Activated CD4-positive, alpha-beta memory T cell treated with anti-CD3 and anti-CD28 coated beads for 36 hours (primary cell): ENCODE measurements at regions of chr5 and their contacts with region 1.

Region 1: DNA sequence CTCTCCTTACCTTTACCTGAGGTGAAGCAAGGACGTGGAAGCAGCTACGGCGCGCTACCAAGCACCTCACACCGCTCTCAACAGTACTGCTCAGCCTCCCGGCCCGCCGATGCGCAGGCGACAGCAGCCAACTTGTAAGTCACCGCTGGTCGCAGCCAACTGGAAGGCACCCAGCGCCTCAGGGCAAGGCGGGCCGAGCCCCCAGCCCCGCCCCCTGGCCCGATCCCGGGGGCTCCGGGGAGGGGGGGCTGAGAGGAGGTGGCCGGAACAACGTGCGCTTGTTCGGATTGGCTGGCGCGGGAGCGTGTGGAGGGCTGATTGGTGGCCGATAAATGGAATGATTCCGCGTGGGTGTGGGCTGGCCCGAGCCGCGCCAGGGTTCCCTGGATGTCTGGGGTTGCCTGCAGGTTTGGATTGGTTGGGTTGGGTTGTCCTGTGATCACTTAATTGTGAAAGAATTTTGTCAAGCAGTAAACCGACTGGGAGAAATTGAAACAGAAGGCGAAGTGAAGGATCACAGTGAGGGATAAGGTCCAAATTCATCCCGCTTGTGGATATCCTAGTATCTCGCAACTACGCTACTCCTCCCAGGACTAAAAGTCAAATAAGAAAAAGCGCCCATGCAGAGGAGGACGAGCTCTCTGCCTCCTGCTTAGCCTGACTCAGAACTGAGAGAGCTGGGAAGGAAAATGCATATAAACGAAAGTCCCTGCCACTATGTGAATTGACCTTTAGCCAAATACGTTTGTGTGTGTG is at the start of gene STARD4:
- DNase-seq: peak; percentile 96
- H3K4me3 Mint-ChIP-seq: peak within 1 kb of the TSS; percentile 88
- H3K27ac Mint-ChIP-seq: peak within 1 kb of the TSS; percentile 94
- H3K4me1 Mint-ChIP-seq: peaks cover 35% of the 10 kb centered on the region
- H3K27me3 Mint-ChIP-seq: no peaks in the 10 kb centered on the region
- total RNA-seq, gene STARD4: 49.5 to 49.9 TPM

Region 2: DNA sequence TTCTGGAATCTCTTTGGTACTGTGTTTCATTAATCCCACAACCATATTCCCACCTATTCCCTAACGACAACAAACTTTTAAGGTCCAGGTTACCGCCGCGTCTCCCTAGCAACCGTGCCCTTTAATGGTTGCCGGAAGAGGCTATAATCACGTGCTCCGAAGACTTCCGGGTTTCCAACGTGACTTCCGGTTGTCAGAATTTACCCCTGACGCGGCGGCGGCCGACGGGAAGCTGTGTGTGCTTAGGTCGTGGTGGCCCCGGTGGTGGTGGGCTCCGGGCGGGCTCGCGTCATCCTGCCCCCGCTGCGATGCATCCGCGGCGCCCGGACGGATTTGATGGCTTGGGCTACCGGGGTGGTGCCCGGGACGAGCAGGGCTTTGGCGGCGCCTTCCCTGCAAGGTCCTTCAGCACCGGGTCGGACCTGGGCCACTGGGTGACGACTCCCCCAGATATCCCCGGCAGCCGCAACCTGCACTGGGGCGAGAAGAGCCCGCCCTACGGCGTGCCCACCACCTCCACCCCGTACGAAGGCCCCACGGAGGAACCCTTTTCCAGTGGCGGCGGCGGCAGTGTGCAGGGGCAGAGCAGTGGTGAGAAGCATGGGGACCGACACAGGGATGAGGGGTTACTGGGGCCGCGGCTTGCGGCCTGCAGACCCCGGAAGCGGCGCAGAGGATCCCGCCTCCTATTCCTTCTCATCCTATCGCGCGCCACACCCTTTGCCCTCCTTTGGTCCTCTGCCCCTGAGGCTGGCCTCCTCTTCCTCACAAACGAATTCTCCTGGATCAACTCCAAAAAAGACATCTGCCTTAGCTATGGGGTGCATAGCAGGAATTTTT is 773.5 kb before region 1 on chr5 and contains the start of gene SLC25A46:
- CTCF ChIA-PET with region 1: no interaction called
- POLR2A ChIA-PET with region 1: no interaction called
- intact Hi-C with region 1: loop called (anchors 5 kb)
- DNase-seq: peak; percentile 93
- H3K4me3 Mint-ChIP-seq: peak within 1 kb of the TSS; percentile 91
- H3K27ac Mint-ChIP-seq: peak within 1 kb of the TSS; percentile 84
- H3K4me1 Mint-ChIP-seq: peaks cover 34% of the 10 kb centered on the region
- H3K27me3 Mint-ChIP-seq: peaks cover 5% of the 10 kb centered on the region
- total RNA-seq, gene SLC25A46: 35.4 to 37.6 TPM

Region 3: DNA sequence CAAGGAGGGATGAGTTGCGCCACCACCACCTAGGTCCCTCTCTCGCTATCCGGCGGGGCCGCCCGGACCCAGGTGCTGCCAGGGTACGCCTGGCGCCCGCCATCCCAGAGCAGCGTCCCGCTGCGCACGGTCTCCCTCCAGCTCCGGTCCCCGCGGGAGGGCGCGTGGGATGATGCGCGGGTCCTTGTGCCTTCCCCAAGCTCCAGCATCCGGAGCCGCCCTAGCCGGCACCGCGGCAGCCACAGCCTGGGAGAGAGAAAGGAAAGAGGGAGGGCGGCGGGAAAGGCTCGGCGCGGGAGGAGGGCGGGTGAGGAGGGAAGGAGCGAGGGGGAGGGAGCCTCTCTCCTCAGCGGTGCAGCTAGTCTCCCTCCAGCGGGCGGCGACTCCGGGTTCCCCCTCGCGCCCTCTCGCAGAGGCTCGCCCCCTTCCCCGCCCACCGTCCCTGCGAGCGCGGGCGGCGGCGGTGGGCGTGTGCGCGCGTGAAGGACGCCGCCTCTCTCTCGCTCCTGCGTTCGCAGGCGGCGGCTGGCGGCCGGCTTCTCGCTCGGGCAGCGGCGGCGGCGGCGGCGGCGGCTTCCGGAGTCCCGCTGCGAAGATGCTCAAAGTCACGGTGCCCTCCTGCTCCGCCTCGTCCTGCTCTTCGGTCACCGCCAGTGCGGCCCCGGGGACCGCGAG is 288.5 kb before region 1 on chr5 and contains the start of gene CAMK4:
- CTCF ChIA-PET with region 1: no interaction called
- POLR2A ChIA-PET with region 1: no interaction called
- intact Hi-C with region 1: loop called (anchors 1 kb)
- DNase-seq: peak; percentile 77
- H3K4me3 Mint-ChIP-seq: peak within 1 kb of the TSS; percentile 89
- H3K27ac Mint-ChIP-seq: peak within 1 kb of the TSS; percentile 90
- H3K4me1 Mint-ChIP-seq: peaks cover 34% of the 10 kb centered on the region
- H3K27me3 Mint-ChIP-seq: no peaks in the 10 kb centered on the region
- total RNA-seq, gene CAMK4: 33.3 to 36.5 TPM

Region 4: GRCh38 chr5:111337688-111338087 is 174.9 kb before region 1 on chr5:
- CTCF ChIA-PET with region 1: no interaction called
- POLR2A ChIA-PET with region 1: no interaction called
- intact Hi-C with region 1: loop called (anchors 1 kb)
- DNase-seq: peak; percentile 9
- H3K4me3 Mint-ChIP-seq: no peak overlapping the region
- H3K27ac Mint-ChIP-seq: peak overlapping the region; percentile 76
- H3K4me1 Mint-ChIP-seq: peaks cover 70% of the 10 kb centered on the region
- H3K27me3 Mint-ChIP-seq: no peaks in the 10 kb centered on the region

Region 5: GRCh38 chr5:111757355-111758283 is 245.1 kb after region 1 on chr5:
- CTCF ChIA-PET with region 1: no interaction called
- POLR2A ChIA-PET with region 1: no interaction called
- intact Hi-C with region 1: loop called (anchors 1 kb)
- DNase-seq: peak; percentile 82
- H3K4me3 Mint-ChIP-seq: peak overlapping the region; percentile 77
- H3K27ac Mint-ChIP-seq: peak overlapping the region; percentile 60
- H3K4me1 Mint-ChIP-seq: peaks cover 10% of the 10 kb centered on the region
- H3K27me3 Mint-ChIP-seq: peaks cover 26% of the 10 kb centered on the region